ENCODE measurements at regions of chr5 and their contacts with region 1.

Region 1: DNA sequence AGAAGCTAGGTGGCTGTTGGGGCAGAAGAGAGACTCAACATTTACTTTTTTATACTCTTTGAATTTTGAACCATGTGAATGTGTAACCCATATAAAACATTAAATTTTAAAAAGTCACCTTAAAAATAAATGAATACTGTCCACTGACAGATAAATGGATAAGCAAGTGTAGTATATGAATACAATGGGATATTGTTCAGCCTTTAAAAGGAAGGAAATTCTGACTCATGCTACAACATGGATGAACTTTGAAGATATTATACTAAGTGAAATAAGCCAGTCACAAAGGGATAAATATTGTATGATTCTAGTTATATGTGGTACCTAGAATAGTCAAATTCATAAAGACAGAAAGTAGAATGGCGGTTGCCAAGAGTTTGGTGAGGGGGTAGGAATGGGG is 113.9 kb downstream of the TMEM174 start:
- DNase-seq: no peak
- ATAC-seq: no peak
- H3K4me3 ChIP-seq: no peak overlapping the region
- H3K4me3 Mint-ChIP-seq: no peak overlapping the region
- H3K27ac ChIP-seq: no peak overlapping the region
- H3K27ac Mint-ChIP-seq: no peak overlapping the region
- H3K4me1 ChIP-seq: no peaks in the 10 kb centered on the region
- H3K4me1 Mint-ChIP-seq: no peaks in the 10 kb centered on the region
- H3K27me3 ChIP-seq: peaks cover 6% of the 10 kb centered on the region
- H3K27me3 Mint-ChIP-seq: peaks cover 41 to 81% of the 10 kb centered on the region in 2 donors
- CTCF ChIP-seq: no peak

Region 2: GRCh38 chr5:73333944-73334703 is 47.2 kb after region 1 on chr5:
- intact Hi-C with region 1: loop called (anchors 2 kb)
- DNase-seq: no peak
- ATAC-seq: no peak
- H3K4me3 ChIP-seq: no peak overlapping the region
- H3K4me3 Mint-ChIP-seq: no peak overlapping the region
- H3K27ac ChIP-seq: no peak overlapping the region
- H3K27ac Mint-ChIP-seq: no peak overlapping the region
- H3K4me1 ChIP-seq: no peaks in the 10 kb centered on the region
- H3K4me1 Mint-ChIP-seq: no peaks in the 10 kb centered on the region
- H3K27me3 ChIP-seq: peaks cover 5% of the 10 kb centered on the region
- H3K27me3 Mint-ChIP-seq: peaks cover 13 to 70% of the 10 kb centered on the region in 2 donors
- CTCF ChIP-seq: no peak